Left ventricle myocardium inferior (tissue), 1 donor: ENCODE measurements at regions of chr6 and their contacts with region 1.

Region 1: DNA sequence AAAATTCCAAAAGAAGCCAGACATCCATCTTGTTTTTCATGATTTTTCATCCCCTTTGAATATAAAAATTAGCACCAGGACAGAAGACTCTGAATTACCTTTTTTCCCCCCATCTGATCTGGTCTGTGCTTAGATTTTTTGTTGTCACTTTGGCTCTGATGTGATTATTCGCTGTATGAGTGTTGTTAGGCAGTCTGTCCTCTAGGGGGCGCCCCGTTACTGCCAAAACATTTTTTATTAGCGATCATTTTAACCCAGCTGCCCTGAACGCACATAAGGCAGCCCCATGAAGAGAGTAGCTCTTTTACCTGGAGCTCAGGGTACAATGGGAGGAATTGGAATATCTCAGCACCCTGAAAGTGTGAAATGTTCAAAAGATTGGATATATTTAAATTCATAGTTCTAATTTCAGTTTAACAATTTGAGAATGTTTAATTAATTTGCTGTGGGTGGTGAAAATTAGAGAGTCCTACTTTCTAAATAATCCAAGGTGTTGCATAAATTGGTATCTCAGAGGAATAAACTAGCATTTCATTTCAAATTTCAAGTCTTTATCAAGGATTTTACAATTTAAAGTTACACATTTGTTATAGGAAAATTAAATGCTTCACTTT is 60.8 kb downstream of the PRPH2 start:
- DNase-seq: peak; percentile 71
- H3K4me3 ChIP-seq: no peak overlapping the region
- H3K27ac ChIP-seq: no peak overlapping the region
- H3K4me1 ChIP-seq: peaks cover 3% of the 10 kb centered on the region
- H3K27me3 ChIP-seq: no peaks in the 10 kb centered on the region
- CTCF ChIP-seq: peak; percentile 92

Region 2: GRCh38 chr6:42726485-42727086 is 64.9 kb after region 1 on chr6:
- intact Hi-C with region 1: loop called (anchors 5 kb)
- DNase-seq: peak; percentile 54
- H3K4me3 ChIP-seq: peak overlapping the region; percentile 72
- H3K27ac ChIP-seq: peak overlapping the region; percentile 86
- H3K4me1 ChIP-seq: peaks cover 17% of the 10 kb centered on the region
- H3K27me3 ChIP-seq: no peaks in the 10 kb centered on the region
- CTCF ChIP-seq: peak; percentile 96

Region 3: DNA sequence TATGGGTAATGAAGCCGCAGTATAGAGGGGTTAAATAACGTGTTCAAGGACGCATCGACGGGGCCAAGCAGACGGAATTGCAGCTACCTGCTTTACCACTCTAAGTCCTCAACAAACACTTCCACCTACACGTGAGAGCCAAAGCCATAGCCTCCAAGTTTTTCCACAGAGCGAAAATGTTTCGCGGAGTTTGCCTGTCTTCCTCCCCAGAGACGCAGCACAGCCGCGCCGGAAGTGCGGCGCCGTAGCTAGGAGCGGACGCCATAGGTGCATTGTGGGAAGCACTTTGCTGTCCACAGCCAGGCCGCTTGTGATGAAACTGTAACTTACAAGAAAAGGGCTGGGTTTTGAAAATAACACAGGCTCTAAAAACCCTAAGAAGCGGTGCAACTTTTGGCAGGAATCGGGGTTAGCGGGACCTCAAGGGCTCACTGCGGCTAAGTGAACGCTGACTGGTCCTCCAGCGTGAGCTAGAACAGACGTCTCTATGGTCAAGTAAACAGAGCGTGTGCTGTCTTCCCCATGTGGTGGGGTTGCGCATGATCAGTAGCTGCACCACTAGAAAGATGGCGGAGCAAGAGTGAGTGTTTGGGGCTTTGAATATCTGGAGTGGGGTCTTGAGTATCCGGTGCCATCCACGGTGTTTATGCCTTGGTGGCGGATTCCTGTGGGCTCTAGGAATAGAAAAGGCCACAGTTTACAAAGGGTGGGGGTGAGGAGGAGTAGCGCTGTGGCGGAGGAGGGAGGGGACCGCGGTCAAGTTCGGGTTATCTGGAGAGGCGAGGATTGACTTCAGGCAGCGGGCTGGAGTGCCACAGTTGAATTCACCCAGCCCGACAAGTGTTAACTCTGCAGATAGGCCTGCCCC is 218.0 kb after region 1 on chr6 and contains the start of gene RPL7L1:
- intact Hi-C with region 1: loop called (anchors 5 kb)
- DNase-seq: peak; percentile 77
- H3K4me3 ChIP-seq: peak within 1 kb of the TSS; percentile 76
- H3K27ac ChIP-seq: peak within 1 kb of the TSS; percentile 97
- H3K4me1 ChIP-seq: peaks cover 47% of the 10 kb centered on the region
- H3K27me3 ChIP-seq: no peaks in the 10 kb centered on the region
- CTCF ChIP-seq: peak; percentile 41
- total RNA-seq, gene RPL7L1: 42.2 TPM

Region 4: GRCh38 chr6:42915732-42916131 is 254.1 kb after region 1 on chr6 and contains the start of gene PTCRA:
- intact Hi-C with region 1: no loop called
- DNase-seq: no peak
- H3K4me3 ChIP-seq: no peak within 1 kb of the TSS
- H3K27ac ChIP-seq: no peak within 1 kb of the TSS
- H3K4me1 ChIP-seq: peaks cover 8% of the 10 kb centered on the region
- H3K27me3 ChIP-seq: peaks cover 40% of the 10 kb centered on the region
- CTCF ChIP-seq: no peak
- total RNA-seq, gene PTCRA: not detected